ENCODE measurements at regions of chr10 and their contacts with region 1.

Region 1: DNA sequence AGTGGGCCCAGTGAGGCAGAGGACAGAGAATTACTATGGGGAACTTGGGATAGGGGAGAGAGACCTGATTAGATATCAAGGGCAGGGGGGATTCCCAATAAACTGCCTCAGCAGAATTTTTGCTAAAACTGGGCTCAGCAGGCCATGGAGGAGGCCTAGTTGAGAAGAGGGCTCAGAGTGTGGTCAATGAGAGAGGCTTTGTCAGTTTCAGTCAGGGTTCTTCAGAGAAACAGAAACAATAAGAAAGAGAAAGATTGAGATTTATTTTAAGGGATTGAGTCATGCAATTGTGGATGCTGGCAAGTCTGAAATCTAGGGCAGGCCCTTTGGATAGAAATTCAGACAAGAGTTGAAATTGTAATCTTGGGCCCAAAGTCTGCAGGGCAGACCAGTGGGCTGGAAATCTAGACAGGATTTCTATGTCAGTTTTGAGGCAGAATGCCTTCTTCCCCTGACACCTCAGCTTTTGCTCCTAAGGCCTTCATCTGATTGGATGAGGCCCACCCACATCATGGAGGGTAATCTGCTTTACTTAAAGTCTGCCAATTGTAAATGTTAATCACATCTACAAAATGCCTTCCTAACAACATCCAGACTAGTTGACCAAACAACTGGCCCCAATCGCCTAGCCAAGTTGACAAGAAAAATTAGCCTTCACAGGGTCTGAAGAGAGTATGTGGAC is 33.5 kb upstream of the CCSER2 start:
- DNase-seq: no peak
- H3K4me3 Mint-ChIP-seq: no peak overlapping the region
- H3K27ac Mint-ChIP-seq: no peak overlapping the region
- H3K4me1 Mint-ChIP-seq: peaks cover 22% of the 10 kb centered on the region
- H3K27me3 Mint-ChIP-seq: peaks cover 4% of the 10 kb centered on the region

Region 2: DNA sequence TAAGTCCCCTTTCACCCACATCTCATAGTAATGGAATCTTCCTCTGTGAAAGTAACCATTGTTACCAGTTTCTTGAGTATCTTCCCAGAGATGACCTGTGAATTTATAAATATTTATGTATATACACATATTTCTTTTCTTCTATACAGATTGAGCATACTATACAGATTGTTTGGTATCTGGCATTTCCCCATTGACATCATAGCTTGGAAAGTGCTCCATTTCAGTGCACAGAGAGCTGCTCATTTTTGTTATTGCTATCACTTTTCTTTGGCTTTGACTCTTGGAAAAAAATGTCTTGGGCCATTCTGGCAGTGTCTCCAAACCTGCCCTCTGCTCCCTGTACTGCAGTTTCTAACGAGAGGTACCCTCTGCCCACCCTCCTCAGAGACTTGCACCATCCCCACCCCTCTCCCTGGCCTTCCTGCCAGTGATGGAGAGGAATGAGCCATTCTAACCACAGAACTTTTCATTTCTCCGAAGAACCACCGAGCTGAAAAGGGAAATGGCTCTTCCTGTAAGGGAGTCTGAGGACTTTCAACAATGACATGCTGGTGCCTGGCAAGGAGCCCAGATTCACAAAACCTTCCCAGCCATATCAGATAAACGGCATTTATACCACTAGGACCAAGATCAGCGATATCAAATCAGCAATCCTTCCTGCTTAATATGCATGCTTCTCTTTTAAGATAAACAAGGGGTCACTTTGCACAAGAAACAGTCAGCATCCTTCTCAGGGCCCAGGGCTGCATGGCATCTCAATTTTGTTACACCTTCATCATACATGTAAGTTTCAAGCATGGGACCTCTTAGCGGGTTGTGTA is 13.8 kb after region 1 on chr10:
- intact Hi-C with region 1: loop called (anchors 1 kb)
- DNase-seq: peak; percentile 37
- H3K4me3 Mint-ChIP-seq: peak overlapping the region; percentile 65
- H3K27ac Mint-ChIP-seq: peak overlapping the region; percentile 77
- H3K4me1 Mint-ChIP-seq: peaks cover 52% of the 10 kb centered on the region
- H3K27me3 Mint-ChIP-seq: peaks cover 1% of the 10 kb centered on the region

Measured in activated T-helper 1 cell treated with anti-CD3 and anti-CD28 coated beads, Interleukin-12 subunit alpha, Interleukin-12 subunit beta, Interleukin-2, Interleukin-4 antibody, amounts not matched to agents 30 ng/mL and 10 ng/mL and 1 ng/mL, durations not matched to agents 14 hours and 24 hours and 36 hours (primary cell).